ENCODE measurements at regions of chr7 and their contacts with region 1.

Region 1: GRCh38 chr7:83301416-83301815 is 138.7 kb upstream of the PCLO start:
- DNase-seq: no peak
- ATAC-seq: no peak

Region 2: GRCh38 chr7:84454174-84454959 is 1153.0 kb after region 1 on chr7:
- intact Hi-C with region 1: loop called (anchors 5 kb)
- DNase-seq: no peak
- ATAC-seq: no peak

Measured in sciatic nerve (tissue), 2 donors.